Endothelial cell of umbilical vein (primary cell): ENCODE measurements at regions of chr2 and their contacts with region 1.

Region 1: DNA sequence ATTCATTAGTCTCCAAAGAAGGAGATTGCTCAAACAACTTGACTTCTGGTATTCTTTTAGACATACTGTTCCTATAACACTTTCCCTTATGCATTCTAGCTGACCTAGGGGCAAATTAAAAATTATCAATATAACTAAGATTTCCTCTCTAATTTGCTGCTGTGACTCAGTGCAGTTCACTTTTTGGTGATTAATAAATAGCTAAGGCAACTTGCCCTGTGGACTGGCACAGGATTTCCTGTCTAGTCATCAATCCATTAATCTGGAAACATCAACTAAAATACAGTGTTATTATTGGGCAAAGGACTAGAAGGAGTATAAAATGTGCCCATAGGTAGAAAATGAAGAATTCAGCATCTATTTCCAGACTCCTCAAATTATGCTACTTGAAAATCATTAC is 83.5 kb upstream of the SERPINE2 start:
- DNase-seq: peak; percentile 79
- H3K4me3 ChIP-seq: no peak overlapping the region
- H3K27ac ChIP-seq: no peak overlapping the region
- H3K4me1 ChIP-seq: peaks cover 18% of the 10 kb centered on the region
- H3K27me3 ChIP-seq: peaks cover 0 to 6% of the 10 kb centered on the region in 2 experiments
- CTCF ChIP-seq: no peak
- POLR2A ChIP-seq: no peak

Region 2: DNA sequence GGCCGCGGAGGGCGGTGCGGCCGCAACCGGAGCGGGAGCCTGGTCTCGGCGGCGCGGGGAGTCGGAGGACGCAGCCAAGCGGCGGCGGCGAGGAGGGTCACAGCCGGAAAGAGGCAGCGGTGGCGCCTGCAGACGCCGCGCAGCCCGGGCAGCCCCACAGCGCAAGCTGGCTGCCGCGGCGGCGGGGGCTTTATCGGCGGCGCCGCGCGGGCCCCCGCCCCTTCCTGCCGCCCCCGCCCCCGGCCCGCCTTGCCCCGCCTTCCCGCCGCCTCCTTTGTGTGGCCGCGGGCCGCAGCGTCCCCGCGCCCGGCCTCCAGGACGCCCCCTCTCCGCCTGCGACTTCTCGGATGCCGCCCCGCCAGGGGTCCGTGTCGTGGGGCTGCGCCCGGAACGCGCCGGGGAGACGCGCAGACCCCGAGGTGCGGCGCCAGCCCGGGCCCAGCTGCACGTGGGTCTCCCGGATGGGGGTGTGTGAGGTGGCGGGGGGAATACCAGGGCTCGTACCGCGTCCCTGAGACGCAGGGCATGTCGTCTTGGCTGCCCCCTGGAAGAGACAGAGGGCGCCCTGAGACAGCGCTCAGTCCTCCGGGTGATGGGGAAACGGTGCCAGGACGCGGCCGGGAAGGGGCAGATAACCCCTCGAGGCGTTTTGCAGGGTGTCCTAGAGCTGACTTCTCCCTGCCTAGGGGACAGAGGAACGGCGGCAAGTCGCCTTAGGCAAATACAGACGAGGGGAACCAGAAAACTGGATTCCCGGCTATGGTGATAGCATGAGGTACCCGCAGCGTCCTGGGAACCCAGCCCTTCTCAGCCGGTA is 83.2 kb before region 1 on chr2 and contains the start of gene SERPINE2:
- CTCF ChIA-PET with region 1: no interaction called
- POLR2A ChIA-PET with region 1: no interaction called
- dilution Hi-C with region 1: no loop called
- intact Hi-C with region 1: loop called (anchors 5 kb)
- DNase-seq: peak; percentile 41
- H3K4me3 ChIP-seq: peak within 1 kb of the TSS; percentile 32 to 73 (median 41)
- H3K27ac ChIP-seq: no peak within 1 kb of the TSS
- H3K4me1 ChIP-seq: peaks cover 6% of the 10 kb centered on the region
- H3K27me3 ChIP-seq: peaks cover 29 to 41% of the 10 kb centered on the region in 2 experiments
- CTCF ChIP-seq: no peak
- POLR2A ChIP-seq: no peak
- total RNA-seq, gene SERPINE2: 8.8 and 15.5 TPM in 2 replicates

Region 3: DNA sequence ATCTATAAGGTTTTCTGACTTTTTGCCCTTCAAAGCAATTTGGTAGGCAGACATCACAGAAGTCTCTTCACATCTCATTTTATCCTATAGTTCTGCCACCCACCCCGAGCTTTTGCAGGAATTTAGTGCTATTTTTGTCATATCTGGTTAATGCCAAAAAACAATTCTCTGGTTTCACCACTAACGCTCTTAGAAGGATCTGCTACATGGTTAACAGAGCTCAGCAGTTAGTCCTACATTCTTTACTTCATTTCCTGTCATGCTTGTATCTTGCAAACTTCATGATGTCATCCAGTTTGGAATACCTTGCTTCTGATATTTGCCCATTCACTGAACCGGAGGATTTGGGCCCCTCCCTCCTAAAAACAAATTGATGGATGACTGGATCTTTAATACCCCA is 33.4 kb after region 1 on chr2:
- CTCF ChIA-PET with region 1: no interaction called
- POLR2A ChIA-PET with region 1: no interaction called
- dilution Hi-C with region 1: no loop called
- intact Hi-C with region 1: no loop called
- DNase-seq: no peak
- H3K4me3 ChIP-seq: no peak overlapping the region
- H3K27ac ChIP-seq: no peak overlapping the region
- H3K4me1 ChIP-seq: no peaks in the 10 kb centered on the region
- H3K27me3 ChIP-seq: no peaks in the 10 kb centered on the region
- CTCF ChIP-seq: no peak
- POLR2A ChIP-seq: no peak

Region 4: GRCh38 chr2:224173933-224174332 is 51.4 kb after region 1 on chr2:
- CTCF ChIA-PET with region 1: no interaction called
- POLR2A ChIA-PET with region 1: no interaction called
- dilution Hi-C with region 1: no loop called
- intact Hi-C with region 1: loop called (anchors 1 kb)
- DNase-seq: no peak
- H3K4me3 ChIP-seq: no peak overlapping the region
- H3K27ac ChIP-seq: no peak overlapping the region
- H3K4me1 ChIP-seq: peaks cover 31% of the 10 kb centered on the region
- H3K27me3 ChIP-seq: peaks cover 0 to 2% of the 10 kb centered on the region in 2 experiments
- CTCF ChIP-seq: no peak
- POLR2A ChIP-seq: no peak

Region 5: GRCh38 chr2:224221455-224221913 is 98.9 kb after region 1 on chr2:
- CTCF ChIA-PET with region 1: no interaction called
- POLR2A ChIA-PET with region 1: no interaction called
- dilution Hi-C with region 1: no loop called
- intact Hi-C with region 1: loop called (anchors 1 kb)
- DNase-seq: peak; percentile 88
- H3K4me3 ChIP-seq: no peak overlapping the region
- H3K27ac ChIP-seq: peak overlapping the region; percentile 99
- H3K4me1 ChIP-seq: peaks cover 26% of the 10 kb centered on the region
- H3K27me3 ChIP-seq: no peaks in the 10 kb centered on the region
- CTCF ChIP-seq: no peak
- POLR2A ChIP-seq: no peak